MCF 10A (cell line): ENCODE measurements at regions of chr17 and their contacts with region 1.

Region 1: GRCh38 chr17:76585818-76586593 is at the start of gene ST6GALNAC2:
- DNase-seq: peak; percentile 72
- H3K4me3 Mint-ChIP-seq: peak within 1 kb of the TSS; percentile 74
- H3K27ac Mint-ChIP-seq: no peak within 1 kb of the TSS
- H3K4me1 Mint-ChIP-seq: peaks cover 11% of the 10 kb centered on the region
- H3K27me3 Mint-ChIP-seq: no peaks in the 10 kb centered on the region
- CTCF ChIP-seq: peak; percentile 58
- total RNA-seq, gene ST6GALNAC2: 5.0 and 7.7 TPM in 2 replicates

Region 2: GRCh38 chr17:76567634-76568432 is 18.2 kb before region 1 on chr17:
- CTCF ChIA-PET with region 1: interaction called, 6 read pairs
- POLR2A ChIA-PET with region 1: interaction called, 171 read pairs
- intact Hi-C with region 1: no loop called
- DNase-seq: peak; percentile 35
- H3K4me3 Mint-ChIP-seq: no peak overlapping the region
- H3K27ac Mint-ChIP-seq: peak overlapping the region; percentile 50
- H3K4me1 Mint-ChIP-seq: peaks cover 27% of the 10 kb centered on the region
- H3K27me3 Mint-ChIP-seq: no peaks in the 10 kb centered on the region
- CTCF ChIP-seq: no peak

Region 3: DNA sequence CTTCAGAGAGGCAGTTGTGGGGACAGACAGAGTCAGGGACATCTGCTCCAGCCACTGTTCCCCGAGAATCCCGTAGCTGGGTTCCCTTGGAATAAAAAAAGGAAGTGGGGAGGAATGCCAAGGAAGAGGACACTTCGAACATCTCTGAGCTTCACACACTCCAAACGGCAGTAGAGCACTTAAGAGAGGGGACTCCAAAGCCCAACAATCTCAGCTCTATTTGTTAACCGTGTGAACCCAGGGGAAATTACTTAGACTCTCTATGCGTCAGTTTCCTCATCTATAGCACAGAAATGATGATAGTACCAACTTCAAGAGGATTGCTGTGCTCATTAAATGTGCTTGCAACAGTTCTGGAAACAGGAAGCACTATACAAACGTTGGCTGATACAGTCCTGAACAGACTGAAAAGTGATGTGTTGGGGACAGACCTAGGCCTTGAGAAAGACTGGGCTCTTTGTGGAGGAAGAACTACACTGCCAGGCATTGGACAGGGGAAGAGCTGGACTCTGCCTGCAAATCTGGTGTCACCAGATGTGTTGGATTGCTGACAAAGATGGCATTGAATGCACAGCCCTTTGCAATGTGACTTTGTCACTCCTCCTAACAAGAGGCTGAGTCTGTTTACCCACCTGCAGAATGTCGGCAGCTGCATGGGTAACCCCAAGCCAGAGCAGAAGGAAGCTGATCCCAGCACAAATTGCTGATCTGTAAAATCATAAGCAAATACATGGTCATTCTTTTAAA is 11.9 kb after region 1 on chr17:
- CTCF ChIA-PET with region 1: interaction called, 5 read pairs
- POLR2A ChIA-PET with region 1: interaction called, 11 read pairs
- intact Hi-C with region 1: no loop called
- DNase-seq: no peak
- H3K4me3 Mint-ChIP-seq: no peak overlapping the region
- H3K27ac Mint-ChIP-seq: peak overlapping the region; percentile 16
- H3K4me1 Mint-ChIP-seq: peaks cover 20% of the 10 kb centered on the region
- H3K27me3 Mint-ChIP-seq: no peaks in the 10 kb centered on the region
- CTCF ChIP-seq: no peak